Dendritic cell treated with granulocyte-macrophage colony-stimulating factor and Interleukin-4, amounts not matched to agents 40 ng/mL and 50 ng/mL, for 4 days (primary cell): ENCODE measurements at regions of chr2 and their contacts with region 1.

Region 1: GRCh38 chr2:47897883-47898731 is 8.2 kb downstream of the FBXO11 start:
- H3K4me3 Mint-ChIP-seq: peak overlapping the region; percentile 34
- H3K27ac Mint-ChIP-seq: peak overlapping the region; percentile 86
- H3K4me1 Mint-ChIP-seq: peaks cover 52% of the 10 kb centered on the region
- H3K27me3 Mint-ChIP-seq: no peaks in the 10 kb centered on the region

Region 2: GRCh38 chr2:47862949-47863348 is 35.2 kb before region 1 on chr2:
- intact Hi-C with region 1: loop called (anchors 5 kb)
- H3K4me3 Mint-ChIP-seq: no peak overlapping the region
- H3K27ac Mint-ChIP-seq: no peak overlapping the region
- H3K4me1 Mint-ChIP-seq: peaks cover 30% of the 10 kb centered on the region
- H3K27me3 Mint-ChIP-seq: no peaks in the 10 kb centered on the region

Region 3: DNA sequence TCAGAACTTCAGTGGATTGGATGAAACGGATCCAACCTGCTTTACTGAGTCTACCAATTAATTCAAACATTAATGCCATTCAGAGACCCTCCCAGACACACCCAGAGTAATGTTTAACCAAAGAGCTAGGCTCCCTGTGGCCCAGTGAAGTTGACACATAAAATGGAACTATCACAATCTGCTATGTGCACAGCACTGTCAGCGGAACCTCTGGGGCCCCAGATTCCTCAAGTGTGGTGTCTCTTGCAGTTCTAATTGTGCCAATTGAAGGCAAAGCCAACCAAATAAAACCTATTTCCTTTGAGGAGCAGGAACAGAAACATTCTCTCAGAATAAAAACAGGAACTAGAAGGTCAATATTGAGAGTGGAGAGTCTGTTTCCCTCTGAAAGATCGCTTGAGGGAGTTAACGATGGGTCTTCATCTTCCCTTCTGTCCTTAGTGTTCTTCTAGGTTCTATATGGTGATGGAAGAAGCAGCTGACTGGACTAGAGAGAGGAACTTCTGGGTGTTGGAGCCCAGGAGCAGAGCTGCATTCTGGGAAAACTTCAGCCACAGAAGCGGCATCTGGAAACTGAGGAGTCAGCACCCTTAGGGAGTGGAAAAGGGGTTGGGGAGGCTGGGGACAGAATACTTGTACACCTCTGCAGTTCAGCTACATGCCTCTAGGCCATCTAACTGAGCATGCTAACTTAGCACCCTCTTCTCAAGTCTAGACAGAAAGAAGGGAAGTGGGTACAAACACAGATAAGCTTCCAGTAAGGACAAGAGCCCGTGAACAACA is 182.6 kb after region 1 on chr2:
- intact Hi-C with region 1: no loop called
- H3K4me3 Mint-ChIP-seq: no peak overlapping the region
- H3K27ac Mint-ChIP-seq: peak overlapping the region; percentile 60
- H3K4me1 Mint-ChIP-seq: peaks cover 23% of the 10 kb centered on the region
- H3K27me3 Mint-ChIP-seq: no peaks in the 10 kb centered on the region